ENCODE measurements at regions of chr3 and their contacts with region 1.

Region 1: DNA sequence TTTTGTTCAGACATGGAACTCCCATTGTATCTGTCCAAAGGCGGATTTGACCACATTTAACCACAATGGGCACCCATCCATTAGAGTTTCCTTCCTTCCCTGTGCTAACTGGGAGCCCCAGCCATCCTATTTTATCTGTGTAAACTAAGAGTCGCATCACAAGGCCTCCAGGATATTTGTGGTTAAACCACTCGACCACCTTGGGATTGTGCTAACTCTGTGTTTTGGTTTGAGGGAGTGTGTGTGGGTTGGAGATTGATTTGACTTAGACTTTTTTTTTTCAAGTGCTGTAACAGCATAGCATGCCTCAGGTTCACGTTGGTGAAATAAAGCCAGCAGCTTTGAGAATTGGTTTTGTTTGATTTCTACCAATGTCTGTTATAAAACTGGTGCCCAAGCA is 100.4 kb upstream of the TP63 start:
- DNase-seq: no peak
- H3K4me3 Mint-ChIP-seq: peak overlapping the region; percentile 41
- H3K27ac Mint-ChIP-seq: peak overlapping the region; percentile 87
- H3K4me1 Mint-ChIP-seq: peaks cover 33% of the 10 kb centered on the region
- H3K27me3 Mint-ChIP-seq: no peaks in the 10 kb centered on the region

Region 2: DNA sequence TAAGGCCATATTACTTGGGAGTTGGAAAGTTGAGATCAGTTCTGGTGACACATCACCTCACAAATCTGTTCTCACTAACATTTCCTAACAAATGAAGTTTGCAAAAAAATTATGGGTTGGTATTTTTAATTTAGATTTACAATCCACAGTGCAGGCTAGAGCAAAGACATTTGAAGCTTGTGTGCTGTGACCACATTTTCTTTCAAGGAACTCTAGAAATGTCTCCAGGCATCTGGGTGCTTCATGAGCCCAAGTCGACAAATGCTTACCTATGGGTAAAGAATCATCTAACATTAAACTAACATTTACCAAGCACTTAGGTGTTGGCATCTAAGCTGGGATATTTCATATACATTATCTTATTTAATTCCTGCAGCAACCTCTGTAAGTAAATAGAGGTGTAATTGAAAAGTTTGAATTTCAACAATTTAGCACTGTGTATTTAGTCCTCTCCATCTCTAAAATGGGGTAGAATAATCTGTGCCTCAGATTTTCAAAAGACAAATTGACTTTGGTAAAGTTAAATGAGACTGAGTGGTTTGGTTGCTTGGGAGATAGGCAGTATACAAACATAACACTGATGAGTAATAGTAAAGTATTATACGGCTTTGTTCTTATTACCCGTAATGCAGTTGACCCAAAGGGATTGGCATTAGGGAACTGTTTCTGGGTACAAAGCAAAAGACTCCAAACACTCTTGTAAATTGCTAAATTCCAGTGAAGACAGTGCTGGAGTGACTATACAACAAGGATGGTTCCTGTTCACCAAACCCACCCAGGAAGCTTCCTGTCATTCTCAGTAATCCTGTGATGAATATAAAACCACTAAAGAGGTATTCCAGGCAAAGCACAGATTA is 196.5 kb before region 1 on chr3:
- intact Hi-C with region 1: loop called (anchors 1 kb)
- DNase-seq: no peak
- H3K4me3 Mint-ChIP-seq: no peak overlapping the region
- H3K27ac Mint-ChIP-seq: peak overlapping the region; percentile 68
- H3K4me1 Mint-ChIP-seq: peaks cover 58% of the 10 kb centered on the region
- H3K27me3 Mint-ChIP-seq: no peaks in the 10 kb centered on the region

Region 3: DNA sequence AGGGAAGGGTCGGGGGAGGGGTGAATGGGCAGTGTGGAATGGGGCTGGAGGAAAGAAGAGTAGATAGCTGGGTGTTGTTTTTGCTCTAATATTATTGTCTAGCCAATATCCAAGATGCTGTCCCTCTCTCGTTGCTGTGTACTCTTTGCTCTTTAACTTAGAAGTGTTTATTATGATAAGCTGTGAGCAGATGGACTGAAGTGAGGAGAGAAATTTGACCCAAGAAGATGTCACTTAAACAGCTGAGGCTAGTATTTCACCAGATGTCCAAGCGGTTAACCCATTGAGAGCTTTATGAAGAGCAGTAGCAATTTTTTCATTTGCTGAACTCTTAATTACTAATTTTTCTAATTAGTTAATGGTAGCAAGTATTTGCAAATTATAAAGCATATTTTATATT is 111.8 kb before region 1 on chr3:
- intact Hi-C with region 1: loop called (anchors 1 kb)
- DNase-seq: no peak
- H3K4me3 Mint-ChIP-seq: no peak overlapping the region
- H3K27ac Mint-ChIP-seq: no peak overlapping the region
- H3K4me1 Mint-ChIP-seq: peaks cover 37% of the 10 kb centered on the region
- H3K27me3 Mint-ChIP-seq: no peaks in the 10 kb centered on the region

Region 4: DNA sequence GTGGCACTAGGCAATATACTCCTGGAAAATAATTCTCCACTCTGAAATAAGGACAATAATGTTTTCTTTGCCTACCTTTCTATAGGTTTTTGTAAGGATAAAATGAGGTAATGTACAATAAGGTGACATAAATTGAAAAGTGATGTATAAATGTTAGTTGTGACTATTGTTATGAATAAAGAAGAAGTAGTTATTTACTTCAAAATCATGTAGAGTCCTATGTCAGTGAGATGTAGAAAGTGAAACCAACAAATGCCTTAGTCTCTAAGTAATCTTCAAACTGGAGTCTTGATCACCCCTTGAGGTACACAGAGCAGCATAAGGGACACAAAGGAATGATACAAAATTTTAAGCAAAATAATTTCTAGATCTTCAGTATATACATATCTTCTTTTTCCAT is 40.1 kb after region 1 on chr3:
- intact Hi-C with region 1: loop called (anchors 1 kb)
- DNase-seq: no peak
- H3K4me3 Mint-ChIP-seq: peak overlapping the region; percentile 9
- H3K27ac Mint-ChIP-seq: peak overlapping the region; percentile 20
- H3K4me1 Mint-ChIP-seq: peaks cover 70% of the 10 kb centered on the region
- H3K27me3 Mint-ChIP-seq: no peaks in the 10 kb centered on the region

Region 5: GRCh38 chr3:189685854-189686253 is 155.0 kb after region 1 on chr3:
- intact Hi-C with region 1: loop called (anchors 2 kb)
- DNase-seq: no peak
- H3K4me3 Mint-ChIP-seq: no peak overlapping the region
- H3K27ac Mint-ChIP-seq: peak overlapping the region; percentile 51
- H3K4me1 Mint-ChIP-seq: peaks cover 43% of the 10 kb centered on the region
- H3K27me3 Mint-ChIP-seq: no peaks in the 10 kb centered on the region

Region 6: GRCh38 chr3:189841473-189842210 is 310.8 kb after region 1 on chr3:
- intact Hi-C with region 1: no loop called
- DNase-seq: no peak
- H3K4me3 Mint-ChIP-seq: no peak overlapping the region
- H3K27ac Mint-ChIP-seq: no peak overlapping the region
- H3K4me1 Mint-ChIP-seq: peaks cover 24% of the 10 kb centered on the region
- H3K27me3 Mint-ChIP-seq: peaks cover 2% of the 10 kb centered on the region